Calu3 (cell line): ENCODE measurements at regions of chr5 and their contacts with region 1.

Region 1: DNA sequence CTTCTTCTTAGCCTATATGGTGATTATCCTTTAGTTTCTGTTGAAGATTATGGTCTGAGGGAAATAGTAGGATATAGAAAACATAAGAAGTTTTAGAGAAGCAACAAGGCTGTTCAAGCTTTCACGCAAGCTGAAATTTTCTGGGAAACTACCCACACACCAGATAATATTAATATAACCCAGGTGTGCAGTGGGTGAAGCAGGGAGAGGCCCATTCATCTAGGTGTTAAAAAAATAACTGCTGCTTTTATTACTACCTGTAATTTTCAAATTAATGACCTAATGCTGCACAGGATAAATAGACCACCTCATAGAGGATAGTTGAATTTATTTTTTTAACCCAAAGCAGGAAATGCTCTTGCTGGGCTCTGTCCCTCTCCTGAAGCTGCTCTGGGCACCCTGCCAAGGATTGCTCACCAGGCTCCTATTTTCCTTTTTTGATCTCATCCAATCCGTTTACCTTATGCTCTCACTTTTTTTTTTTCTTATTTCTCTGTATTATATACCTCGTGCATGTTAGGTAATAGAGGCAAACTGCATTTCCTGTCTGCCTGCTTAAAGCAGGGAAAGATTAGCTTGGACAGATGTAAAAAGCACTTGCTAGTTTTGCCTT is 124.3 kb upstream of the SLC12A2 start:
- DNase-seq: peak; percentile 97
- H3K4me3 Mint-ChIP-seq: peak overlapping the region; percentile 5
- H3K27ac Mint-ChIP-seq: peak overlapping the region; percentile 98
- H3K4me1 Mint-ChIP-seq: peaks cover 67% of the 10 kb centered on the region
- H3K27me3 Mint-ChIP-seq: no peaks in the 10 kb centered on the region
- CTCF ChIP-seq: no peak

Region 2: DNA sequence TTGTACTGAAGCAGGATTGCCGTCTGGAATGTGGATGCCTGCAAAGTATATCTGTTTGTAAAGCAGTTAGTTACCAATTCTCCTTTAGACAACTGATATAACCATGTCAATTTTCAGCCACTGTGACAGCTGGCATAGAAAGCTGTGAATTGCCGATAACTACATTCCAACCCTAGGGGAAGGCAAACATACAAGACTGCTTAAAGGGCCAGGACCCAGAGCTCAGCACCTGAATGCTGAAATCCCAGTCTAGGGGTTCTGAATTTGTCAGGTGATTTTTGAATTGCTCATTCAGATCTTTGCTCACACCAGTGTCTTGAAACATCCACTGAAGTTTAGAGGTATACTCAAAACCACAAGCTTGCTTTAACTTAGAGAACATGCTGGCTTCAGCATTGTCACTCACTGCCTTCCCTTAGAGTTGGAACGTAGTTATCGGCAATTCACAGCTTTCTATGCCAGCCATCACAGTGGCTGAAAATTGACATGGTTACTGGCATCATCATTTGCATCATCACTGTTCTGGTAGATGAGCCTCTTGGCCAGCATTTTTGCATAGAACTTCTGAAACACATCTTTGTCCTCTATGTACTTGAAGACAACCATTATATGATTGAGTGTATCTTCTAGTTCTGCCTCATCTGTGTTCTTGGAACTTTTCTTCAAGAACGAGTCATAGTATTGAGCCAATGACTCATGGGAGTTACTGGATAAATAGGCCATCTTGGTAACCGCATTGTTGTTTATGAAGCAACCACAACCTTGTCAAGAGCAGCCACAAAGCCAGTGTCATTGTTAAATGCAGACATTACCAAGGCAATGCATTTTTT is 173.9 kb before region 1 on chr5:
- CTCF ChIA-PET with region 1: no interaction called
- intact Hi-C with region 1: no loop called
- DNase-seq: peak; percentile 17
- H3K4me3 Mint-ChIP-seq: no peak overlapping the region
- H3K27ac Mint-ChIP-seq: no peak overlapping the region
- H3K4me1 Mint-ChIP-seq: peaks cover 20% of the 10 kb centered on the region
- H3K27me3 Mint-ChIP-seq: no peaks in the 10 kb centered on the region
- CTCF ChIP-seq: no peak

Region 3: DNA sequence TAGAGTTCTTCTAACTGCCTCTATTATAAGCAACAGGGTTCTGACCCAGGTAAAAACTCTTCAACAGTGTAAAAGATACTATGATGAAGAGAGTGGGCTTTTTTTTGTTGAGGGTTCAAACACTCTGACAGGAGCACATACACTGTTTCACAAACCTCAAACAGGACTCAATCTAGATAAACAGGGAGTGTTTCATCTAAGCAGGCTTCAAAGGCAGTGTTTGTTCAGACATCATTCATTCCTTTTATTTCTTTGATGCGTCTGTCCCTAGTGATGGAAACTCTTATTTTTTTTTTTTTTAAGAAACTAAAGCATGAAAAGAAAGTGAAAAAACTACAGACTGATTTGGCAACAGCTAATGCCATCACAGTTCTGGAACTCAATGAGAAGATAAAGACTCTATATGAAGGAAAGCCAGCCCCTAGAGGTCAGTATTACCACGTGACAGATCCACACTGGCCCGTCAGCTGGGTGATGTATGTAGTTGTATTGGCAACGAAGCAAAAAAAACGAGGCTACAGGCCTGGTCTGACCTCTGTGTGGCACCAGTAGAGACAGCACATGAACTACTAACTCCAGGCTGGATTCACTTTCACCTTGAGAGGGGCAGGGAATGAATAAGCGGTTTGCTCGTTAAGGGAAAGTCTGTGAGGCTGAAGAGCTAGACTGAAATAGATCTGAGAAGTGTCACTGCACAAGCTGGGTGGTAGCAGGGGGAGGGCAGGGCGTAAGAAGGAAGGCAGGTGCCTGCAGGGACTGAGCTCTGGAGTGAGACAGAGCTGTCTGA is 83.8 kb before region 1 on chr5:
- CTCF ChIA-PET with region 1: interaction called, 8 read pairs
- intact Hi-C with region 1: loop called (anchors 2 kb)
- DNase-seq: peak; percentile 84
- H3K4me3 Mint-ChIP-seq: no peak overlapping the region
- H3K27ac Mint-ChIP-seq: no peak overlapping the region
- H3K4me1 Mint-ChIP-seq: peaks cover 18% of the 10 kb centered on the region
- H3K27me3 Mint-ChIP-seq: no peaks in the 10 kb centered on the region
- CTCF ChIP-seq: peak; percentile 42

Region 4: GRCh38 chr5:127909078-127909477 is 50.2 kb before region 1 on chr5:
- CTCF ChIA-PET with region 1: interaction called, 10 read pairs
- intact Hi-C with region 1: loop called (anchors 1 kb)
- DNase-seq: peak; percentile 71
- H3K4me3 Mint-ChIP-seq: no peak overlapping the region
- H3K27ac Mint-ChIP-seq: peak overlapping the region; percentile 83
- H3K4me1 Mint-ChIP-seq: peaks cover 61% of the 10 kb centered on the region
- H3K27me3 Mint-ChIP-seq: no peaks in the 10 kb centered on the region
- CTCF ChIP-seq: peak; percentile 72

Region 5: DNA sequence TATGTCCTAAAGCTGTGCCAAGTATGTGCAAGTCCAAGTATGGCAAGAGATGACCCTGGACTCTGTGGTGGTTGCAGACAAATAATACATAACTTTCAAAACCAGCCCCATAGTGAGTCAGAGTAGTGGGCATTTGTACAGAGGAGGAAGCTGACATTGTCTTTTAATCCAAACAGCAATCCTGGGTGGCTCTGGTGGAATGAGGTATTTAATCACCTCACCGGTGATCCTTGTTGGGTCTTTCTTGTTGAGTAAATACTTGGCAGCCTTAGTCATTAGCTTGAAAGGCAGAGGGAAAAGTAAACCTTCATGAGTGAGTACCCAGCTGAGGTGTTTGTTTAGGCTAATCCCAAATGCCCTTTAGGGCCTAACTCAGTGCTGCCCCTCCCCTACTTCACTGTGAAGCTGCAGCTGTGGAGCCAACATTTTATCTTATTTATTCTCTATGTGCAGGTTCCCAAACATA is 24.4 kb before region 1 on chr5:
- CTCF ChIA-PET with region 1: interaction called, 15 read pairs
- intact Hi-C with region 1: loop called (anchors 1 kb)
- DNase-seq: peak; percentile 87
- H3K4me3 Mint-ChIP-seq: peak overlapping the region; percentile 9
- H3K27ac Mint-ChIP-seq: peak overlapping the region; percentile 97
- H3K4me1 Mint-ChIP-seq: peaks cover 84% of the 10 kb centered on the region
- H3K27me3 Mint-ChIP-seq: no peaks in the 10 kb centered on the region
- CTCF ChIP-seq: peak; percentile 47

Region 6: GRCh38 chr5:128038643-128039042 is 79.4 kb after region 1 on chr5:
- CTCF ChIA-PET with region 1: no interaction called
- intact Hi-C with region 1: loop called (anchors 2 kb)
- DNase-seq: no peak
- H3K4me3 Mint-ChIP-seq: no peak overlapping the region
- H3K27ac Mint-ChIP-seq: no peak overlapping the region
- H3K4me1 Mint-ChIP-seq: peaks cover 64% of the 10 kb centered on the region
- H3K27me3 Mint-ChIP-seq: no peaks in the 10 kb centered on the region
- CTCF ChIP-seq: no peak